Caco-2 (cell line): ENCODE measurements at regions of chr6 and their contacts with region 1.

Region 1: DNA sequence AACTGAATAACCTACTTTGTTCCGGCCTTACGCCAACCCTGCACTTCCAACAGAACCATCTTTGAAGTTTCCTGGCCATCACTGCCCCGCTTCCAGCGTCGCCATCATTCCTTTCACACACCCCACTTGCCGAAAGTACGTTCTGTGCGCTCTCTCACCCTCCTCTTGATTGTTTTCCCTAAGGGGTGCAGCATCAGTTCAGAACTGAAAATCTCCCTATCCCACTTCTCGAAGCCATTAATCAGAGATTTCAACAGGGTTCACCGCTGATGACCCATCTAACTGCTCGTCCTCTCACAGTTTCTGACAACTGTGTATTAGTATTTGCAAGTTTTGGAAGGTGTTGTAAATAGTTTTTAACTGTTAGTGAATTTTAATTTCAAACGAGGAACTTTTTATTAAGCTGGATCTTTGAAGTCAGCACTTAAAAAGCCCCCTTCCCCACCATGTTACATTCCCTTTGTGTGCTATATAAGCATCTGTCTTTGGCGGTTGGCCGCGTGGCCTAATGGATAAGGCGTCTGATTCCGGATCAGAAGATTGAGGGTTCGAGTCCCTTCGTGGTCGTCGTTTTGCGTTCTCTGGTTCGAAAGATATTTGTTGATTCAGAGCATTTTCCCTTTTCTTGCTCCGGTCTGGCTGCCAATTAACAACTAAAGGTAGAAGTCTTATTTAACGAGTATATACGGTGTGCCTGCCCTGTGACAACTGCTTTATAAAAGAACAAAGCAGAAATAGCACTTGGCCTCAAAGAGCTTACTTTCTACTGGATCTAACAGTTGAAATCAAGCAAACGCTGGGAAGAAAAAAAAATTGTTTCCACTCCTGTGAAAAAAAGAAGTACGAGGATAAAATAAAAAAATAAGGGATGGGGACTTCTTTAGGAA is 42.6 kb downstream of the TRIM27 start:
- DNase-seq: peak; percentile 62 to 72
- H3K4me3 ChIP-seq: no peak overlapping the region
- H3K4me3 Mint-ChIP-seq: peak overlapping the region; percentile 81
- H3K27ac Mint-ChIP-seq: peak overlapping the region; percentile 96
- H3K4me1 ChIP-seq: peaks cover 14% of the 10 kb centered on the region
- H3K4me1 Mint-ChIP-seq: peaks cover 18% of the 10 kb centered on the region
- H3K27me3 ChIP-seq: no peaks in the 10 kb centered on the region
- H3K27me3 Mint-ChIP-seq: no peaks in the 10 kb centered on the region
- CTCF ChIP-seq: no peak

Region 2: DNA sequence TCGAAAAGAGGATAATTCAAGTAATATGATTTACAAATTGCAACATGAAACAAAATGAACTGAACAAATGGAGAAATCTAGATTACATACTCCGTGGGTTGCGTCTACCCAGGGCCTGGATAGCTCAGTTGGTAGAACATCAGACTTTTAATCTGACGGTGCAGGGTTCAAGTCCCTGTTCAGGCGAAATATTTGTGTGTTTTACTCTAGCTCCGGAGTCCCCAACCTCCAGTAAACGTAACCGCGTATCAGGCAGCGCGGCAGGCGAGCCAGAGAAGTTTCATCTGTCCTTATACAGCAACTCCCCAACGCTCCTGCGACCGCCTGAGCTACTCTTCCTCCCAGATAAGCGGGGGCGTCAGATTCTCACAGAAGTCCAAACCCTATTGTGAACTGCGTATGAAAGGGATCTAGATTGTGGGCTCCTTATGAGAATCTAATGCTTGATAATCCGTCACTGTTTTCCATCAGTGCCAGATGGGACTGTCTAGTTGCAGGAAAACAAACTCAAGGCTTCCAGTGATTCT is 133.4 kb before region 1 on chr6:
- CTCF ChIA-PET with region 1: no interaction called
- POLR2A ChIA-PET with region 1: no interaction called
- intact Hi-C with region 1: no loop called
- DNase-seq: peak; percentile 69 to 88
- H3K4me3 ChIP-seq: peak overlapping the region; percentile 18
- H3K4me3 Mint-ChIP-seq: peak overlapping the region; percentile 78
- H3K27ac Mint-ChIP-seq: peak overlapping the region; percentile 74
- H3K4me1 ChIP-seq: no peaks in the 10 kb centered on the region; the same call in 1 of the 2 replicates
- H3K4me1 Mint-ChIP-seq: peaks cover 15% of the 10 kb centered on the region
- H3K27me3 ChIP-seq: no peaks in the 10 kb centered on the region
- H3K27me3 Mint-ChIP-seq: peaks cover 5% of the 10 kb centered on the region
- CTCF ChIP-seq: no peak

Region 3: DNA sequence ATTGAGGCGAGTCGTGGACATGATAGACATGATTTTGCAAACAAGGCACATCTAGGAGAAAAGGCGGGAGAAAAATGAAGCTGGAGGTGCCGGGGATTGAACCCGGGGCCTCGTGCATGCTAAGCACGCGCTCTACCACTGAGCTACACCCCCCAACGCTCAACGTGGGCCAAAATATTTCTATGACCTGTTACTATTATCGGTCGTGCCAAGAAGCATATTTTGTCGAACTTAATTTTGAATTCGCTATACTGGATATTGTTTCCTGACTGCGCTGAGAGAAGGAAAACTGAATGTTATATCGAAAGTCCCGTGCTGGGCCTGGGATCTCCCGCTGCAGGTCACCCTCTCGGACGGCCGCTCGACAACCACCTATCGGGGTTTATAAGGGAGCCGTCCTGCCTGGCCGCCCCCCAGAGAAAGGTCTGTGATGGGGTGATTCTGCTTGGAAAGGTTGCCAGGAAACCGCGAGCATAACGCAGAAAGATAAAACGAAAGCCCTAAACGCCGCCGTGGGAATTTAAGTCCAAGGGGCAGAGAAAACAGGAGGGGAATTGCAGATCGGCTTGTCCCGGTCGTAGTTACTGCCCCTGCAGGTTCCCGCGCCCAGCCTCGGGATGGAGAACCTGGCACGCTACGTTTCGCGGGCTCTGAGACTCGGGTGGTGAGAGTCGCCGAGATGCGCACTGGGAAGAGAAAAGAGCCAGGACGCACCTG is 17.4 kb before region 1 on chr6:
- CTCF ChIA-PET with region 1: interaction called, 3 read pairs
- POLR2A ChIA-PET with region 1: interaction called, 15 read pairs
- intact Hi-C with region 1: no loop called
- DNase-seq: peak; percentile 85 to 87
- H3K4me3 ChIP-seq: peak overlapping the region; percentile 81
- H3K4me3 Mint-ChIP-seq: peak overlapping the region; percentile 79
- H3K27ac Mint-ChIP-seq: peak overlapping the region; percentile 96
- H3K4me1 ChIP-seq: peaks cover 11% of the 10 kb centered on the region
- H3K4me1 Mint-ChIP-seq: peaks cover 20% of the 10 kb centered on the region
- H3K27me3 ChIP-seq: no peaks in the 10 kb centered on the region
- H3K27me3 Mint-ChIP-seq: no peaks in the 10 kb centered on the region
- CTCF ChIP-seq: no peak